CD4-positive, alpha-beta T cell (primary cell): ENCODE measurements at regions of chr19 and their contacts with region 1.

Region 1: DNA sequence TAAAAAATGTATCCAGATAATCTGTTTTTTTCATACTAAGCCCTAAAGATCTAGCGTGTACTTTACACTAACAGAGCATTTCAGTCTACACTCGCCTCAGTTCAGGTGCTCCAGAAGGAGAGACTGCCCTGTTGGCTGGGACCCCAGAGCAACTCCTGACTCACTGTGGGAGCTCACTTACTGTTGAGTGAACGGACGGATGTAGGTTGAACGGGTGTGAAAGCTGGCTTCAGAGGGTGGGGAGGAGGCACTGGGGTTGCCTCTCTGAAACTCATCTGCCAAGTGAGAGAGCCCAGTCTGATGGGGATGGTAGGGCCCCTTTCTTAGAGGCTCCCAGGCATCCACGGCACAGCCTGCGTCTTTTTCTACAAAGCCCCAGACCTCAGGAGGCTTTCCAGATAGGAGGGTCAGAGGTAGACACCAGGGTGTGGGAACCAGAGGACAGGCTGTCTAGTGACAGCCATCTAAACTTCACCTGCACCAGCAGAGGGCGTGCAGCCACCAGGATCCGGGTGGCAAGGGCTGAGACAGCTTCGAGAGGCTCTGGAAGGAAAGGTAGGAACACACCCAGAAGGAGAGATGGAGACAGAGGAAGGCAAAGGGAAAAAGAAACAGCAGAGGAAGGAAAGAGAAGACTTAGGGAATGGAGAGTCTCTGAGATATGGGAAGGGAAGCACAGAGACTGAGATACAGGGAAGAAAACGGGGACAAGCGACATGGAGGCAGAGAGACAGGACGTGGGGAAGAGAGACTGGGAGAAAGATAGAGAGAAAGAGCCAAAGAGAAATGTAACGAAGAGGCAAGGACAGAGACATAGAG is 3.7 kb downstream of the KASH5 start:
- DNase-seq: peak; percentile 67 to 89 (median 76)
- ATAC-seq: peak; percentile 76
- H3K4me3 ChIP-seq: no peak overlapping the region
- H3K4me3 Mint-ChIP-seq: no peak overlapping the region
- H3K27ac ChIP-seq: no peak overlapping the region
- H3K27ac Mint-ChIP-seq: no peak overlapping the region
- H3K4me1 ChIP-seq: peaks cover 23% of the 10 kb centered on the region
- H3K4me1 Mint-ChIP-seq: peaks cover 19% of the 10 kb centered on the region
- H3K27me3 ChIP-seq: no peaks in the 10 kb centered on the region
- H3K27me3 Mint-ChIP-seq: no peaks in the 10 kb centered on the region
- CTCF ChIP-seq: peak; percentile 95

Region 2: GRCh38 chr19:49224856-49225255 is 166.9 kb before region 1 on chr19:
- CTCF ChIA-PET with region 1: no interaction called
- POLR2A ChIA-PET with region 1: no interaction called
- intact Hi-C with region 1: loop called in 1 of 2 experiments (anchors 5 kb)
- DNase-seq: peak in 5 of 14 experiments; percentile 11 to 56 (median 27)
- ATAC-seq: peak; percentile 43
- H3K4me3 ChIP-seq: no peak overlapping the region
- H3K4me3 Mint-ChIP-seq: no peak overlapping the region
- H3K27ac ChIP-seq: no peak overlapping the region
- H3K27ac Mint-ChIP-seq: no peak overlapping the region
- H3K4me1 ChIP-seq: peaks cover 8% of the 10 kb centered on the region
- H3K4me1 Mint-ChIP-seq: peaks cover 7% of the 10 kb centered on the region
- H3K27me3 ChIP-seq: peaks cover 0 to 4% of the 10 kb centered on the region in 2 experiments
- H3K27me3 Mint-ChIP-seq: peaks cover 13% of the 10 kb centered on the region
- CTCF ChIP-seq: no peak

Region 3: DNA sequence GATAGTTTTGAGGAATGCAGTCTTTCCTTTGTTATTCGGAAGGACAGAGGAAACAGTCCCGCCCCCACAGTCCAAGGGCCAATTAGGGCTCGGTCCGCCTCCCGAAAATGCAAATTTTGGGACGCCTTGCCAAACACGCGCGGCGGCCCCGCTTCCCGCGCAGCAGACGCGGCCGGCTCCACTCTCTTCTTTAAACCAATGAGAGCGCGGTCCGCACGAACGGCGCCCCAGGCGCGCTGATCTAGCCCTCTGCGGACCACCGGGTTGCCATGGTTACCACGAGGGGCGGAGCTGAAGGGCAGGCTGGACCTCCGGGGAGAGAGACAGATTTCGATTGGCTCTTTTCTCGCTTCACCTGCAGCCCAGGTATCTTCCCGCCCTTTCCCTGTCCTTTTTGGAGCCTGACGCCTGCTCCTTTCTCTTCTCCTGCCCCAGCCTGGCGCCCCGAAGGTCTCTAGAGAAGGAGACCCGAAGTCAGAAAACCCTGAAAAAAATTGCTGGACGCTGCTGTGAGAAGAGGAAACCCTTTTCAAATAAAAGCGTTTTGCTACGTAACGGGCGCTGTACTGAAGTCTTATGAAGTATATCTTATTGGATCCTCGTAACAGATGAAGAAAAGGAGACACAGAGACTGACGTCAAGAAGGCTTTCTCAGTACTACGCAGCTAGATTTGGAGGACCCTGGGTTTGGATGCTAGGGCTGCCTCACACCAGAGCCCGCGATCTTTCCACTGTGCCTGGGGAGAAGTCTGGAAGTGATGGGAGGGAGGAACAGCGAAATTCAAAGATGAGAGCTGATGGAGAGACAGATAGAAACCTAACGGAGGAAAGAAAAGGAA is 29.5 kb after region 1 on chr19:
- CTCF ChIA-PET with region 1: interaction called, 4 read pairs
- POLR2A ChIA-PET with region 1: interaction called, 3 read pairs
- intact Hi-C with region 1: loop called in 1 of 2 experiments (anchors 1 kb)
- DNase-seq: peak in 5 of 14 experiments; percentile 31 to 64 (median 57)
- ATAC-seq: peak; percentile 45
- H3K4me3 ChIP-seq: no peak overlapping the region
- H3K4me3 Mint-ChIP-seq: peak overlapping the region; percentile 79
- H3K27ac ChIP-seq: no peak overlapping the region
- H3K27ac Mint-ChIP-seq: no peak overlapping the region
- H3K4me1 ChIP-seq: peaks cover 45% of the 10 kb centered on the region
- H3K4me1 Mint-ChIP-seq: peaks cover 53% of the 10 kb centered on the region
- H3K27me3 ChIP-seq: peaks cover 65 to 82% of the 10 kb centered on the region in 2 experiments
- H3K27me3 Mint-ChIP-seq: peaks cover 79% of the 10 kb centered on the region
- CTCF ChIP-seq: no peak

Region 4: DNA sequence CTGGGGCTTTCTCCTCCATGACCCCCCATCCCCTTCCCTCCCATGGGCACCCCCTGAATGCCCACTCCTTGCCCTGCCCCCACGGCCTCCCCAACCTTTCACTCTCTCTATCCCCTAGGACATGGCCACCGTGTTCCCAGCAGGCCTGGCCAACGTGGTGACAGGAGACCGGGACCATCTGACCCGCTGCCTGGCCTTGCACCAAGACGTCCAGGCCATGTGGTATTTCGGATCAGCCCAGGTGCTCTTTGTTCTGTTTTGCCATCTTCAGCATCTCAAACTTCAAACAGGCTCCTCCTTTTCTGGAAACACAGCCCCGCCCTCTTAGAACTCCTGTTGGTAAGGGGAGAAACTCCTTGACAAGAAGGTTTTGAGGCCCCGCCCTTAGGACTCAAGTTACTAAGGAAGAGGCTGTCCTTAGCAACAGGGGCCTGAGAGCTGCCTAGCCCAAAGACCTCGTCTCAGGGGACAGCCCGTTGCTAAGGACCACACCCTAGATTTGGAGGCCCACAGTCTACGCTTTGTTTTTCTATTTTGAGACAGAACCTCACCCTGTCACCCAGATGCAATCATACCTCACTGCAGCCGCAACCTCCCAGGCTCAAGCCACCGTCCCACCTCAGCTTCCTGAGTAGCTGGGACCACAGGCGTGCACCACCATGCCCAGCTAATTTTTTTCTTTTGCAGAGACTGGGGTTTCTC is 77.1 kb after region 1 on chr19:
- CTCF ChIA-PET with region 1: interaction called, 17 read pairs
- POLR2A ChIA-PET with region 1: interaction called, 5 read pairs
- intact Hi-C with region 1: loop called in 1 of 2 experiments (anchors 1 kb)
- DNase-seq: peak; percentile 74 to 99 (median 84)
- ATAC-seq: peak; percentile 75
- H3K4me3 ChIP-seq: peak overlapping the region; percentile 9
- H3K4me3 Mint-ChIP-seq: peak overlapping the region; percentile 84
- H3K27ac ChIP-seq: peak overlapping the region; percentile 86 to 96
- H3K27ac Mint-ChIP-seq: peak overlapping the region; percentile 98
- H3K4me1 ChIP-seq: peaks cover 96% of the 10 kb centered on the region
- H3K4me1 Mint-ChIP-seq: peaks cover 42% of the 10 kb centered on the region
- H3K27me3 ChIP-seq: no peaks in the 10 kb centered on the region
- H3K27me3 Mint-ChIP-seq: no peaks in the 10 kb centered on the region
- CTCF ChIP-seq: no peak

Region 5: GRCh38 chr19:49546825-49547565 is 155.2 kb after region 1 on chr19:
- CTCF ChIA-PET with region 1: no interaction called
- POLR2A ChIA-PET with region 1: no interaction called
- intact Hi-C with region 1: loop called in 1 of 2 experiments (anchors 10 kb)
- DNase-seq: peak in 6 of 14 experiments; percentile 59 to 90 (median 82)
- ATAC-seq: peak; percentile 79
- H3K4me3 ChIP-seq: peak overlapping the region; percentile 30
- H3K4me3 Mint-ChIP-seq: peak overlapping the region; percentile 85
- H3K27ac ChIP-seq: no peak overlapping the region
- H3K27ac Mint-ChIP-seq: peak overlapping the region; percentile 74
- H3K4me1 ChIP-seq: peaks cover 64% of the 10 kb centered on the region
- H3K4me1 Mint-ChIP-seq: peaks cover 54% of the 10 kb centered on the region
- H3K27me3 ChIP-seq: no peaks in the 10 kb centered on the region
- H3K27me3 Mint-ChIP-seq: no peaks in the 10 kb centered on the region
- CTCF ChIP-seq: peak; percentile 93